ENCODE measurements at regions of chr1 and their contacts with region 1.

Region 1: DNA sequence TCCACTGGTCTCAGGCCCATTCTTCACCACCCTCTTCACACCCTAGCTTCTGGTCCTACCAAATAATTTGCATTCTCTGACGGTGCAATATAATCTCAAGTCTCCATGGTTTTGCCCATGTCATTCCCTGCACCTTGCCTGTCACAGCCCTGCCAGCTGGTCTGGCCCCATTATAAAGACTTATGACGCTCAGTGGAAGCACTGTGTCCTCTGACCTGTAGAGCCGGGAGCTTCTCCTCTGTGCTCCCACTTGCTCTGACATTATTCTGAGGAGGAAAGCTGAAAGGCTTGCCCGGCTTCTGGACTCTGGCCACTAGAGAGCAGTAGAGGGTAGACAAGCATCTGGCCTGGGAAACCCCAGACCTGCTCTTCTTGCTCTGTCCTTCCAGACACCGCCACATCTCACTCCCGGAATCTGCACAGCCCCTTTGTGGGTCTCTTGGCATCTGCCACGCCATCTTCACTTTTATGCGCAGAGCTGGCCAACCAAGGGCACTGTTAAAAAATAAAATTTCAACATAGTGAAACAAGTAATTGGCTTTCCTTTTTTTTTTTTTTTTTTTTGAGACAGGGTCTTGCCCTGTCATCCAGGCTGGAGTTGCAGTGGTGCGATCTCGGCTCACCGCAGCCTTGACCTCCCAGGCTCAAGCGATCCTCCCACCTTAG is 44.4 kb downstream of the NENF start:
- DNase-seq: peak; percentile 92
- H3K4me3 ChIP-seq: no peak overlapping the region
- H3K27ac ChIP-seq: peak overlapping the region; percentile 69
- H3K4me1 ChIP-seq: no peaks in the 10 kb centered on the region
- H3K27me3 ChIP-seq: no peaks in the 10 kb centered on the region
- CTCF ChIP-seq: peak; percentile 81

Region 2: DNA sequence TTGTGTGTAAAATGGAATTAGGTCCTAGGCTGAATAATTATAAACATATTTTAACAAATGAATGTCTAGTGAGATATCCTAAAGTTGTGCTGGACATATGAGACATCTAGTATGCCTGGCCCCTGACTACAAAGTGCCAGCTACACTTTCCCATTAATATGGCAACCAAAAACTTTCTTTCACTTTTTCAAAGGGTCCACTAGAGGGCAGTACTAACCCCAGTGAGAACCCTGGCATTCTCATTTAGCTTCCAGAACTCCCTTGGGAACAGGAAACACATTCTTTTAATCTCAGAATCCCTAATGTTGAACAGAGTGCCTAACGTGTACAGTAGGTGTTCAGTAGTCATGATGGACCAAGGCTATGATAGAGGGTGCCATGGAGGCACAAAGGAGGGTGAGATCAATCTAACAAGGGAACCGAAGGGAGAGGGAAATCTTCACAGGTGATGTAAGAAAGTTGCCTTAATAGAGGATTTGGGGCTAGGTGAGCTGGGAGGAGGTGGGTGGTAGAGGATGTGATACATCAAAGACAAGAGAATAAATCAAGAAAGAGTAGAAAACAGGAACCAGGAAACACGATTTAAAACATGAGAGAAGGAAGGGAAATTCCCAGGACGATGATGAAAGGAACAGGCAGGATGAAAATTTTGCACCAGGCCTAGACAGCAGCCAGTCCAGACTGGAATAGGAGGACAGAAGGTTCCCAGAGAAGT is 272.8 kb after region 1 on chr1:
- intact Hi-C with region 1: loop called (anchors 10 kb)
- DNase-seq: no peak
- H3K4me3 ChIP-seq: no peak overlapping the region
- H3K27ac ChIP-seq: no peak overlapping the region
- H3K4me1 ChIP-seq: no peaks in the 10 kb centered on the region
- H3K27me3 ChIP-seq: no peaks in the 10 kb centered on the region
- CTCF ChIP-seq: peak; percentile 67